GM12878 (cell line): ENCODE measurements at regions of chr7 and their contacts with region 1.

Region 1: DNA sequence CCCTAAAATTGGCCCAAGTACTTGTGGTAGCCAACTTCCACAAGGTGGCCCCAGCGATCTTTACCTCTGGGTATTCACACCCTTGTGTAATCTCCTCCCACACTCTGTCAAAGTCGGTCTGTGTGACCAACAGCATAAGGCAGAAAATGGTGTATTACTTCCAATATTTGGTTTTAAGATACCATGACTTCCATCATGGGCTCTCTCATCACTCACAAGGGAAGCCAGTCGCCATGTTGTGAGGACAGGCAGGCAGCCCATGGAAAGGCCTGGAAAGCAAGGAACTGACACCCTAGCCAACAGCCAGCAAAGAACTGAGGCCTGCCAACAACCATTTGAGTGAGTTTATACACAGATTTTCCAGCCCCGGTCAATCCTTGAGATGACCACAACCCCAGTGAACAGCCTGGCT is 91.0 kb upstream of the KMT2E start:
- DNase-seq: peak; percentile 71
- ATAC-seq: peak; percentile 99
- H3K4me3 ChIP-seq: no peak overlapping the region
- H3K27ac ChIP-seq: no peak overlapping the region
- H3K4me1 ChIP-seq: peaks cover 6% of the 10 kb centered on the region; the same call in 1 of the 2 replicates
- H3K27me3 ChIP-seq: no peaks in the 10 kb centered on the region
- CTCF ChIP-seq: peak; percentile 86 to 98 (median 89); a peak in 5 of 6 replicates
- EP300 ChIP-seq: no peak
- POLR2A ChIP-seq: no peak
- RAD21 ChIP-seq: peak; percentile 97

Region 2: DNA sequence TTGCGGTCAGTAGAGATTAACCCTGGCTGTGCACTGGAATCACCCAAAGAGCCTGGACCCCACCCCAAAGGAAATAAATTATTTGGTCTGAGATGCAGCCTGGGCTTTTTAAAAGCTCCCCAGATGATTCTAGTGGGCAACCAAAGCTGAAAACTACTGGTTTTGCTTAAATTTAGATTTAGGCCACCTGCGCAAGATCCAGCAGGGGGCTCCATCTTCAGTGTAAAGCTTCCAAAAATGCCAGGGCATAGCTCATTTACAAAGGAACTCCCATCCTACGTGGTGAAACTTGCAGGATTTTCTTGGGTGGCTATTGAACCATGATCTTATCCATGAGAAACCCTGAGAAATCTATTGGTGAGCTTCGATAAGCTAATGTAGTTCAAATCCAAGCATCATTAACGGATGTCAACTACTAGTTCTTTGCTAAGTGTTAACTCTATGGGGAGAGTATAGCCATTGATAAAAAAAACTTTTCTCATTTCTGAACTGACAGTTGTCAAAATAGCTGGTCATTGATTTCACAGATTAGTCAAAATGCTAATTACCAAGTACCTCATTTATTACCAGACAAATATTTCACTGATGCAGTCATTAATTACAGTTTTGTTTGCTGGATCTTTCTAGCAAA is 279.3 kb before region 1 on chr7:
- CTCF ChIA-PET with region 1: interaction called, 103 read pairs
- POLR2A ChIA-PET with region 1: no interaction called
- RAD21 ChIA-PET with region 1: interaction called, 23 read pairs
- SMC1A ChIA-PET with region 1: interaction called, 60 read pairs
- in situ Hi-C with region 1: loop called (anchors 5 kb)
- intact Hi-C with region 1: loop called (anchors 1 kb)
- DNase-seq: no peak
- ATAC-seq: peak; percentile 58; the same call in 2 of the 3 replicates
- H3K4me3 ChIP-seq: no peak overlapping the region
- H3K27ac ChIP-seq: no peak overlapping the region
- H3K4me1 ChIP-seq: no peaks in the 10 kb centered on the region
- H3K27me3 ChIP-seq: no peaks in the 10 kb centered on the region; a peak in 2 of 4 replicates
- CTCF ChIP-seq: peak; percentile 54 to 60 (median 59)
- EP300 ChIP-seq: no peak
- POLR2A ChIP-seq: no peak
- RAD21 ChIP-seq: peak; percentile 38

Region 3: GRCh38 chr7:104878577-104878976 is 44.4 kb before region 1 on chr7:
- CTCF ChIA-PET with region 1: interaction called, 581 read pairs
- POLR2A ChIA-PET with region 1: interaction called, 15 read pairs
- RAD21 ChIA-PET with region 1: interaction called, 217 read pairs
- SMC1A ChIA-PET with region 1: interaction called, 413 read pairs
- in situ Hi-C with region 1: loop called (anchors 5 kb)
- intact Hi-C with region 1: loop called (anchors 1 kb)
- DNase-seq: peak; percentile 65
- ATAC-seq: peak; percentile 90
- H3K4me3 ChIP-seq: peak overlapping the region; percentile 43; the same call in 1 of the 2 replicates
- H3K27ac ChIP-seq: peak overlapping the region; percentile 30; the same call in 1 of the 2 replicates
- H3K4me1 ChIP-seq: peaks cover 15% of the 10 kb centered on the region
- H3K27me3 ChIP-seq: no peaks in the 10 kb centered on the region
- CTCF ChIP-seq: no peak
- EP300 ChIP-seq: no peak
- POLR2A ChIP-seq: no peak
- RAD21 ChIP-seq: no peak

Region 4: GRCh38 chr7:104900525-104901239 is 22.3 kb before region 1 on chr7:
- CTCF ChIA-PET with region 1: interaction called, 581 read pairs
- POLR2A ChIA-PET with region 1: interaction called, 3 read pairs
- RAD21 ChIA-PET with region 1: interaction called, 14 read pairs
- SMC1A ChIA-PET with region 1: interaction called, 31 read pairs
- in situ Hi-C with region 1: no loop called
- intact Hi-C with region 1: loop called (anchors 1 kb)
- DNase-seq: no peak
- ATAC-seq: no peak
- H3K4me3 ChIP-seq: no peak overlapping the region
- H3K27ac ChIP-seq: no peak overlapping the region
- H3K4me1 ChIP-seq: peaks cover 29% of the 10 kb centered on the region
- H3K27me3 ChIP-seq: no peaks in the 10 kb centered on the region
- CTCF ChIP-seq: no peak
- EP300 ChIP-seq: no peak
- POLR2A ChIP-seq: no peak
- RAD21 ChIP-seq: no peak

Region 5: GRCh38 chr7:104956753-104957450 is 33.9 kb after region 1 on chr7:
- CTCF ChIA-PET with region 1: interaction called, 4 read pairs
- POLR2A ChIA-PET with region 1: interaction called, 4 read pairs
- RAD21 ChIA-PET with region 1: interaction called, 12 read pairs
- SMC1A ChIA-PET with region 1: interaction called, 11 read pairs
- in situ Hi-C with region 1: no loop called
- intact Hi-C with region 1: no loop called
- DNase-seq: peak; percentile 77
- ATAC-seq: peak; percentile 94
- H3K4me3 ChIP-seq: no peak overlapping the region
- H3K27ac ChIP-seq: peak overlapping the region; percentile 58
- H3K4me1 ChIP-seq: peaks cover 17% of the 10 kb centered on the region
- H3K27me3 ChIP-seq: no peaks in the 10 kb centered on the region
- CTCF ChIP-seq: no peak
- EP300 ChIP-seq: peak; percentile 83 to 91
- POLR2A ChIP-seq: no peak
- RAD21 ChIP-seq: no peak

Region 6: DNA sequence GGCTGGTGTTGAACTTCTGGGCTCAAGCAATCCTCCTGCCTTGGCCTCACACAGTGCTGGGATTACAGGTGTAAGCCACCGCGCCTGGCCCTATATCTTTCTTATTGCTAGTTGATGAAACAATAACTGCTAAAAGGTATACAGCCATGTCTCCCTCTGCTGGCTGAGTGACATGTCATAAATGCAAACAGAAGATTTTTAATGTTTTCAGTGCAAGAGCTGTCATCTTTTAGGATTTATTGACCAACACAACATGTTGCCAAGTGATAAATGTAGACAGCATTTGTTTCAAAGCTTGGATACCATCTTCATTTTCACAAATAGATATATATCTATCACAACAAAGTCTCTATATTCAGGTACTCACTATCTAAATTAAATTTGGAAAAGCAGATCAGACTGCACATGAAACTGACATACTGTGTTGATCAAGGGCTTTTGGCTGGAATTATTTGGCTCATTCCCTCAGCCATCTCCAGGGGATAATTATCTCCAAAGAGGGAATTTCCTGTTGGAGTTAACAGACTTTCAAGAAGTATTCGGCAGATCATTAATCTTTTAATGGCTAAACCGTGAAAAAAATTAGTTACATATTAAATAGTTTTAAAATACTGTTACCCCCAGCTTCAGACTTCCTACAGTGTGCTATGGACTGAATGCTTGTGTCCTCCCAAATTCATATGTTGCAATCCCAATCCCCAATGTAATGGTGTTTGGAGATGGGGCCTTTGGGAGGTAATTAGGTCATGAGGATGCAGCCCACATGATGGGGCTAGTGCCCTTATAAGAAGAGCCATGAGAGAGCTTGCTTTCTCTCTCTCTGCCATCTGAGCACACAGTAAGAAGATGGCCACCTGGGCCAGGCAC is 507.0 kb after region 1 on chr7:
- CTCF ChIA-PET with region 1: interaction called, 5 read pairs
- POLR2A ChIA-PET with region 1: no interaction called
- RAD21 ChIA-PET with region 1: interaction called, 3 read pairs
- SMC1A ChIA-PET with region 1: interaction called, 4 read pairs
- in situ Hi-C with region 1: no loop called
- intact Hi-C with region 1: loop called (anchors 10 kb)
- DNase-seq: no peak
- ATAC-seq: peak; percentile 88
- H3K4me3 ChIP-seq: no peak overlapping the region
- H3K27ac ChIP-seq: no peak overlapping the region
- H3K4me1 ChIP-seq: no peaks in the 10 kb centered on the region
- H3K27me3 ChIP-seq: no peaks in the 10 kb centered on the region
- CTCF ChIP-seq: peak; percentile 46 to 66 (median 56)
- EP300 ChIP-seq: no peak
- POLR2A ChIP-seq: no peak
- RAD21 ChIP-seq: peak; percentile 76

Region 7: DNA sequence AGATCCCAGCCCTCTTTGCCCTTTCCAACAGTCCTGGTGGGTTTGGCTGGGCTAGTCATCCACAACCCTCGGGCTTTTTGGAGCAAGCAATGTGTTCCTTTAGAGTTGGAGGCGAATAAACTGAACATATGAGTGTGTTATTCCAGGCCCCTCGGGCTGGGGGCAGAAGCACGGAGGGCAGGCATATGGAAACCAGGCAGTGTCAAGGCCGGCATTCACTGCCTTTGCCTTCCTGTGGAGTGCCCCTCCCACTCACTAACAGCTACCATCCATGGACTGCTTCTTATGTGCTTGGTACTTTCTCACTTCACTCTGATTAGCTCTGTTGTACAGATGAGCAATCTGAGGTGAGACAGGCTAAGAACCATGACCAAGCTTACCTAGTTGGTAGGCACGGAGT is 712.2 kb after region 1 on chr7:
- CTCF ChIA-PET with region 1: no interaction called
- POLR2A ChIA-PET with region 1: no interaction called
- RAD21 ChIA-PET with region 1: no interaction called
- SMC1A ChIA-PET with region 1: no interaction called
- in situ Hi-C with region 1: no loop called
- intact Hi-C with region 1: no loop called
- DNase-seq: no peak
- ATAC-seq: no peak
- H3K4me3 ChIP-seq: no peak overlapping the region
- H3K27ac ChIP-seq: no peak overlapping the region
- H3K4me1 ChIP-seq: no peaks in the 10 kb centered on the region
- H3K27me3 ChIP-seq: peaks cover 0 to 2% of the 10 kb centered on the region in 2 experiments; a peak in 2 of 4 replicates
- CTCF ChIP-seq: no peak
- EP300 ChIP-seq: no peak
- POLR2A ChIP-seq: no peak
- RAD21 ChIP-seq: no peak

Region 8: DNA sequence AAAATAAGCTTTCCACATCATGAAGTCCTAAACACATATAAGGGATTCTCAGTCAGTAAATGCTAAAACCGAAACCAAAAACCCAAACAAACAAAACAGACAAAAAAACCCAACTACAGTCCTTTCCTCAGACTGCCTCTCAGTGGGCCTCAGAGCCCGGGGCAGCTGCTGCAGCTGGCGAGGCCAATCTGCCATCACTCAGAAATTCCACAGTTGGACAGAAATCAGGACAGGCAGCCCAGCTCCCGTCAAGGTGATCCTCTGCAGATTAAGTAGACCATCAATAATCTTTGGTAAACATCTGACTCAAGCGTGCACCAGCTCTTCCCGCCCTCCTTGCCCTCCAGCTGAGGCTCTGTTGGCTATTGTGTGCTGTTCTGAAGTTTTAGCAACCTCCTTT is 811.2 kb after region 1 on chr7:
- CTCF ChIA-PET with region 1: no interaction called
- POLR2A ChIA-PET with region 1: no interaction called
- RAD21 ChIA-PET with region 1: no interaction called
- SMC1A ChIA-PET with region 1: no interaction called
- in situ Hi-C with region 1: no loop called
- intact Hi-C with region 1: no loop called
- DNase-seq: no peak
- ATAC-seq: no peak
- H3K4me3 ChIP-seq: no peak overlapping the region
- H3K27ac ChIP-seq: no peak overlapping the region
- H3K4me1 ChIP-seq: no peaks in the 10 kb centered on the region
- H3K27me3 ChIP-seq: no peaks in the 10 kb centered on the region
- CTCF ChIP-seq: no peak
- EP300 ChIP-seq: no peak
- POLR2A ChIP-seq: no peak
- RAD21 ChIP-seq: no peak